ENCODE measurements at regions of chr2 and their contacts with region 1.

Region 1: DNA sequence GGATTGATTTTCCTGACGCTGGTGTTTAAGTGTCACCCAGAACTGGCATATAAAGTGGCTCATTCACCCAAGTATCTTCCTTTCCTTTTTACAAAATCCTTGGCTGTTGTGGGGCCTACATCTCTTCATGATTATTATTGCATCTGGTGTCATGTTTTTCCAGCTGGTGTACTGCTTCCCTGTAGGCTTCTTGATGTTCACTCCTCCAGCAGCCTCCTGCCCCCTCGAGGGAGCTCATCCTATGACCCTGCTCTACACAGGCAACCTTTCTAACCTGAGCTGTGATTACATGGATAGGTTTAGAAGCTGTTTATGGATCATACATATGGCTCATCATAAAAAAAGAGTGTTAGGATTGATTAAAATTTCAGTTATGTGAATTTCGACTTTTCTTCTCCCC is 12.4 kb upstream of the AGPS start:
- DNase-seq: no peak
- H3K4me3 ChIP-seq: no peak overlapping the region
- H3K27ac ChIP-seq: no peak overlapping the region
- H3K4me1 ChIP-seq: no peaks in the 10 kb centered on the region
- CTCF ChIP-seq: no peak

Region 2: GRCh38 chr2:177392373-177393202 is 12.4 kb after region 1 on chr2 and contains the start of gene AGPS:
- CTCF ChIA-PET with region 1: no interaction called
- POLR2A ChIA-PET with region 1: interaction called, 10 read pairs
- intact Hi-C with region 1: no loop called
- DNase-seq: peak; percentile 10
- H3K4me3 ChIP-seq: peak within 1 kb of the TSS; percentile 59
- H3K27ac ChIP-seq: no peak within 1 kb of the TSS
- H3K4me1 ChIP-seq: no peaks in the 10 kb centered on the region
- CTCF ChIP-seq: no peak
- total RNA-seq, gene AGPS: 2.1 and 2.3 TPM in 2 replicates